Left ventricle myocardium inferior (tissue), 1 donor: ENCODE measurements at regions of chr11 and their contacts with region 1.

Region 1: DNA sequence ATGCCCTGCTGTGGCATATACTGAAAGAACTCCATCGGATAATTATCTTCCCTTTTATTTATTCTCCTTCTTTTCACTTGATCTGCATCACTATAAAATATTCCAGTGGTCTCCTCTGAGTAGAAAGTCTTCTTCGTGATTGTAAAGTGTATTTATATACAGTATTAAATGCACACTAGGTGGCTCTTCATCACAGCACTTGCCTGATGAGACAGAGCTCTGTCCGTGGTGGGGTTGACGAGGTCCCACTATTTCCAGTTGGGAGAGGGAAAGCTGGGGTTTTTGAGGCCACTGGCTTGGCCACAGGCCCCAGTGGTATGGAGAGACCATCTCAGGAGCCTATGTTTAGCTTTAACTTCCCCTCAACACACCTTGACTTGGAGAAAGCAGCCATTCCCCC is 31.6 kb upstream of the ZBTB16 start:
- DNase-seq: no peak
- H3K4me3 ChIP-seq: no peak overlapping the region
- H3K27ac ChIP-seq: no peak overlapping the region
- H3K4me1 ChIP-seq: peaks cover 17% of the 10 kb centered on the region
- H3K27me3 ChIP-seq: no peaks in the 10 kb centered on the region
- CTCF ChIP-seq: peak; percentile 43

Region 2: GRCh38 chr11:114257621-114258558 is 230.0 kb after region 1 on chr11:
- intact Hi-C with region 1: loop called (anchors 2 kb)
- DNase-seq: peak; percentile 72
- H3K4me3 ChIP-seq: peak overlapping the region; percentile 55
- H3K27ac ChIP-seq: peak overlapping the region; percentile 88
- H3K4me1 ChIP-seq: peaks cover 85% of the 10 kb centered on the region
- H3K27me3 ChIP-seq: no peaks in the 10 kb centered on the region
- CTCF ChIP-seq: peak; percentile 45